HEK293 (cell line): ENCODE measurements at regions of chr7 and their contacts with region 1.

Region 1: GRCh38 chr7:37916673-37917660 is at the start of gene SFRP4:
- H3K4me3 ChIP-seq: peak within 1 kb of the TSS; percentile 57
- H3K27ac ChIP-seq: no peak within 1 kb of the TSS; the same call in 1 of the 2 replicates
- H3K4me1 ChIP-seq: peaks cover 3% of the 10 kb centered on the region; the same call in 1 of the 2 replicates
- CTCF ChIP-seq: 0 out of 2 replicates have a peak, but pooled peaks have one; percentile 34

Region 2: GRCh38 chr7:37663693-37664092 is 253.3 kb before region 1 on chr7:
- CTCF ChIA-PET with region 1: no interaction called
- POLR2A ChIA-PET with region 1: no interaction called
- H3K4me3 ChIP-seq: no peak overlapping the region
- H3K27ac ChIP-seq: no peak overlapping the region
- H3K4me1 ChIP-seq: no peaks in the 10 kb centered on the region
- CTCF ChIP-seq: no peak

Region 3: GRCh38 chr7:37901236-37901827 is 15.6 kb before region 1 on chr7:
- CTCF ChIA-PET with region 1: interaction called, 26 read pairs
- POLR2A ChIA-PET with region 1: no interaction called
- H3K4me3 ChIP-seq: no peak overlapping the region
- H3K27ac ChIP-seq: no peak overlapping the region
- H3K4me1 ChIP-seq: no peaks in the 10 kb centered on the region
- CTCF ChIP-seq: peak; percentile 44; the same call in 1 of the 2 replicates

Region 4: DNA sequence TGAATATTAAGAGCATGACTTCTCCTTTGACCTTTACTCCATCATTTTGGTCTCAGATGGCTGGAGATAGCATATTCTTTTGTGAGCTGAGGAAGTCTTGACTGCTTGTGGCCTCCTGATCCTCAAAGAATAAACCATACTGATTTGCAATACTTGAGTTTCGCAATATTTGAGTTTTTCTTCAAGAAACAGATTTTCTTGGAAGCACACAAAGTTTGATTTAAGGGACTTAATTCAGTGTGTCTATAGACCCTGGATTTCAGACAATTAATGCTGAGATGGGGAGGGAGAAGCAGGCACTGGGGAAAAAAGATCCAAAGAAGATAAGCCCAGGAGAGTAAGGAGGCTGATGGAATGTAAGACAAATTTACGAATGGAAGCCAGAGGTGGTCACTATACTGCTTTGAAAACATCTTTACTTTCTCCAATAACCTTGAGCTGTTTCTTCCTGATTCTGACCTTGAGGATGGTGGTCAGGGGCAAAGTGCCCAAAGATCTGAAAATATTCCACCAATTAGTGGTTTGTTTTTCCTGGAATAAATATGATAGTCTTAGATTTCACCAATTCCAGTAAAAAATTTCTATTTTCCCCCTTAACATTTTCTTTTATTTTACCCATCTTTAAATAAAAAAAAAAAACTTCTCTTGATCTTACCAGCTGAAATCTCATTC is 10.9 kb after region 1 on chr7:
- CTCF ChIA-PET with region 1: interaction called, 10 read pairs
- POLR2A ChIA-PET with region 1: no interaction called
- H3K4me3 ChIP-seq: no peak overlapping the region
- H3K27ac ChIP-seq: peak overlapping the region; percentile 22; the same call in 1 of the 2 replicates
- H3K4me1 ChIP-seq: no peaks in the 10 kb centered on the region
- CTCF ChIP-seq: no peak

Region 5: GRCh38 chr7:38195804-38196595 is 279.0 kb after region 1 on chr7:
- CTCF ChIA-PET with region 1: interaction called, 11 read pairs
- POLR2A ChIA-PET with region 1: no interaction called
- H3K4me3 ChIP-seq: no peak overlapping the region
- H3K27ac ChIP-seq: no peak overlapping the region
- H3K4me1 ChIP-seq: peaks cover 15% of the 10 kb centered on the region
- CTCF ChIP-seq: no peak

Region 6: DNA sequence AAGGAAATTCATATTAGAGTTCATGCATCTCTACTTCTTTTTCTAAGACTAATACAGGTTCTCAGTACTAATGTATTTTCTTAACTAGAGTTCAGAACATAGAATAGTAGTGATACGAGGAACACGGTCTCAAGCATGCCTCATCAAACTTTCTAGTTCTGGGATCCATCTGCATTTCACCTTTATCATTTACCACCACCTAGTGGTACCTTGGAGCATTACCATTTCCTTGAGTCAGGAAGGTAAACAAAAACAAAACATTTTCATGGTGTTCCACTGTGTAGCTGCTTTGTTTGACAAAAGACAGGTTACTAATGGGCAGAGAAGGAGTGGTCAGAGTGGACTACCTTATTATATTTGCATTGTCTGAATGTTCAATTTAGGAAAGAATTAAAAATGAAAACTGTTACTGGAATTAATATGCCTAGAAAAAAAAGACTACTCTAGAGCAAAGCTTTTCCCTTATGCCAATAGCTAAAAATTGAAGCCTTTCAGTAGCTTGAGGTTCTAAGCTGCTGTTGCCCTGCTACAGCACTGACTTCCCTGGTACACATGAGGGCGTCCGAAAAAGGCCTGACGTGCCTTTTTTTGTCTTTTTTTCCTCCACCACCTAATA is 305.6 kb after region 1 on chr7:
- CTCF ChIA-PET with region 1: interaction called, 14 read pairs
- POLR2A ChIA-PET with region 1: no interaction called
- H3K4me3 ChIP-seq: no peak overlapping the region
- H3K27ac ChIP-seq: no peak overlapping the region
- H3K4me1 ChIP-seq: no peaks in the 10 kb centered on the region
- CTCF ChIP-seq: 0 out of 2 replicates have a peak, but pooled peaks have one; percentile 27